GM10248 (cell line): ENCODE measurements at regions of chr3 and their contacts with region 1.

Region 1: DNA sequence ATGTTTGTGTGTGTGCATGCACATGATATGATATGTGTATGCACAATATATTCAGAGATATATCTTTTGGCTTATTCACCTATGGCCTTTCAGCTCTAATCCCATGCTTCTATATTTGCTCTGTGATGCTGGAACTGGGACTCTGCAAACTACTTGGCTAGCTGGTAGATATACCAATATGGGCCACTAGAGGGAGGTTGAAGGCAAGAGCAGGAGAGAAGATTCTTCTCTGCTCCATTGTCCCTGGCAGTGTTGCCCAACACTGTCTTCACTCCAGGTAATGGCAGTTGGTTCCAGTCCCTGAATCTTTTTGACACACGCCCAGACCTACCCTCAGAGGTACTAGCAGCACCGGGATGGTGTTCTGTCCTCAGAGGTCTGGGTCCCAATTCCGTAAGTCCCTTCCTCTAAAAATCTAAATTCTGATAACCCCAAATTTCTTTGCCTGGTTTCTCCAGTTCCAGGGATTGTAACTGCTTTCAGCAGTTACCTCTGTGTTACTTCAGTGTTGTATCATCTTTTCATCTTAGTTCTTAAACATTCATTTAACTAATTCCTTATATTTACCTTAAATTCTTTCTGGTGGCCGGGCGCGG is 44.7 kb downstream of the GTPBP8 start:
- DNase-seq: peak; percentile 68
- CTCF ChIP-seq: peak; percentile 79

Region 2: GRCh38 chr3:113019182-113020137 is 16.0 kb before region 1 on chr3:
- CTCF ChIA-PET with region 1: interaction called, 32 read pairs
- POLR2A ChIA-PET with region 1: no interaction called
- DNase-seq: peak; percentile 94
- CTCF ChIP-seq: no peak